Activated T-helper 1 cell treated with anti-CD3 and anti-CD28 coated beads, Interleukin-12 subunit alpha, Interleukin-12 subunit beta, Interleukin-2, Interleukin-4 antibody, amounts not matched to agents 30 ng/mL and 10 ng/mL and 1 ng/mL, durations not matched to agents 14 hours and 24 hours and 36 hours (primary cell): ENCODE measurements at regions of chr22 and their contacts with region 1.

Region 1: GRCh38 chr22:49992921-49993648 is 19.5 kb downstream of the IL17REL start:
- DNase-seq: peak; percentile 48
- H3K4me3 Mint-ChIP-seq: no peak overlapping the region
- H3K27ac Mint-ChIP-seq: no peak overlapping the region
- H3K4me1 Mint-ChIP-seq: peaks cover 10% of the 10 kb centered on the region
- H3K27me3 Mint-ChIP-seq: peaks cover 3% of the 10 kb centered on the region

Region 2: DNA sequence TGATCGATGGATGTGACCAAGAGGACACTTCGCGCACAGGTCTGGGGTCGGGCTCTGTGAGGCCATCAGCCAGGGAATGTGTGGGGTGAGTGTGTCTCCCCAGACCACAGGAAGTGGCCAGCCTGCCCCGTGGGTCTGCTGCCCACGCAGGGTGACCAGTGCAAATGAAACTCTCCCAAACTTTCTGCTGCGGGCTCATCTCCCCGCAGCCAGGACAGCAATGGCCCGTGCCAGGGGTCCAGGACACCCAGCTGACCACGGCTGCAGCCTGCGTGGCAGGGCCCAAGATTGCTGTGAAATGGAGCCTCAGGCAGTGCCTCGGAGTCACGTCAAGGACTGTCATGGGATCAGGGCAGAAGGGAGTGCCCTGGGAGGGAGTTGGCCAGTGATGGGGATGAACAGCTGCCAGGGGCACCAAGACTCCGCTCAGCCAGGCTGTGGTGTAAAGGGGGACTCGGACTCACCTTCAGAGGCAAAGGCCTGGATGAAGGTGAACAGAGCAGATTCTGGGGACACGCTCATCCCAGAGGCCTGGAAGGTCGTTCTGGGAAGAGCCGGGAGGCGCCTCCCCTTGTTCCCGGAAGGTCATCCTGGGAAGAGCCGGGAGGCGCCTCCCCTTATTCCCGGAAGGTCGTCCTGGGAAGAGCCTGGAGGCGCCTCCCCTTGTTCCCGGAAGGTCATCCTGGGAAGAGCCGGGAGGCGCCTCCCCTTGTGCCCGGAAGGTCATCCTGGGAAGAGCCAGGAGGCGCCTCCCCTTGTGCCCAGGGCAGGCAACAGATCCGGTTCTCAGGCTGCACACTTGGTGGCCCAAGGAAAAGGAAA is 418.0 kb before region 1 on chr22:
- intact Hi-C with region 1: no loop called
- DNase-seq: no peak
- H3K4me3 Mint-ChIP-seq: no peak overlapping the region
- H3K27ac Mint-ChIP-seq: no peak overlapping the region
- H3K4me1 Mint-ChIP-seq: no peaks in the 10 kb centered on the region
- H3K27me3 Mint-ChIP-seq: no peaks in the 10 kb centered on the region

Region 3: GRCh38 chr22:50016988-50017700 is 24.1 kb after region 1 on chr22:
- intact Hi-C with region 1: no loop called
- DNase-seq: no peak
- H3K4me3 Mint-ChIP-seq: peak overlapping the region; percentile 19
- H3K27ac Mint-ChIP-seq: peak overlapping the region; percentile 45
- H3K4me1 Mint-ChIP-seq: peaks cover 9% of the 10 kb centered on the region
- H3K27me3 Mint-ChIP-seq: peaks cover 2% of the 10 kb centered on the region

Region 4: DNA sequence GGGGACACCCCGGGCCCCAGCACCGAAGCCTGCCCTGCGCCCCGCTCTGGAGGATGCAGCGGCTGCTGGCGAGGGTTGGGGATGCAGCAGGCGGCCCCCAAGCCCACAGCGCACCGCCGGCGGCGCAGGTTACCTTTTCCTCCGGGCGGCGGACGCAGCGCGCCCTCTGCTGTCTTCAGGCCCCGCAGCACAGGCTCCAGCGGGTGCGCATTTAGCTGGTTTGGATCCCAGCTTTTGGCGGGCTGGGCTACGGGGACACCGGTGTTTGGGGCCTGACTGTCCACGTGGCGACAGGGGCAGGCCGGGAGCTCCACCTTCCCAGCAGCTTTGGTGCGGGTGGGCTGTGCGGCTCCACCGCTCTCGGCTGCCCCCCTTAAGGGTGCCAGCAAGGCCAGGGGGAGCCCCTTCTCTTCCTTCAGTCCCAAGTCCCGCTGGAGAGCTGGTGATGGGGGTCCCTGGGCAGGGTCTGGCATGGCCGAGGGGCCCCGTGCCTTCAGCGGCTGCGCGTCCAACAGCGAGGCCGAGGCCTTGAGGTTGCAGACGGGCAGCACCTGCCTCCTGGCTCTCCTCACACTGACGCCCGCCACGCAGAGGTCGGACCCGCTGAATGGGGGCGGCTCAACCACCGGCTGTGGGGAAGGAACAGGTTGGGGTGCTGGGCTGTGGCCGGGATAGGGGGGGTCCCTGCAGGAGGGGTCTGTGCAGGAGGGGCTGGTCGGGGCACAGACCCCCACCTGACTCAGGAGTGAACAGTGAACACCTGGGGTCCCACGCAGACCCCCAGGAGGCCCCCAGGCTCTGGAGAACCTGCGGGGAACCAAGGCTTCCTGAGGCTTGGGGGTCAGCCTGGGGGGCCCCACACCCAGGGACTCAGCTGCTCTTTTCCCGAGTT is 37.5 kb after region 1 on chr22:
- intact Hi-C with region 1: loop called (anchors 1 kb)
- DNase-seq: peak; percentile 76
- H3K4me3 Mint-ChIP-seq: no peak overlapping the region
- H3K27ac Mint-ChIP-seq: no peak overlapping the region
- H3K4me1 Mint-ChIP-seq: peaks cover 8% of the 10 kb centered on the region
- H3K27me3 Mint-ChIP-seq: peaks cover 5% of the 10 kb centered on the region

Region 5: DNA sequence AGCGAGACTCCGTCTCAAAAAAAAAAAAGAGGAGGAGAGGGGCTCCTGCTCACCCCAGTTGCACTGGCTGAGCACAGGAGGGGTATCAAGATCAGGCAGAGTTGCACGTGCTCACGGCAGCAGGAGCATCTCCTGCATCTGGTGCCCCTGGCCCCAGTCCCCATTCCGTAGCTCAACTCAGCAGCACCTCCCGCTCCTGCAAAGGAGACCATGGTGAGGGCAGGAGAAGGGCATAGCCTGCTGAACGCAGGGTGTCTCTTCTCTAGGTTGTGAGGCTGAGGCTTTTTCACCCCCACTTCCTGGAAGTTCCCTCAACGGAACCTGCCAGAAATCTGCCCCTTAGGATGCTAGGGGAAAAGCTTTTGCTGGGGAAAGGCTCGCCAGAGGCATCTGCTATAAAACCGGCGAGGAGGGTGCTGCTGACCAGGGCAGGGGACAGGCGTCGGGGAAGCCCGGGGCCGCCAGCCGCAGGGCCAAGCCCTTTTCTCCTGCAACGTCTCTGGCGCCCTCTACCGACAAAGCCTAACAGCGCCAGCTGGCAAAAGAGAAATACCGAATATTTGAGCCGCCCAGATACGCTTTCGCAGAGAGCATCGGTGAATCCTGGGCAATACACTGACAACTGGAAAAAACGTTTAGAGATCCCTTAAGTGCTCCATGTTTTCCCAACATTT is 349.0 kb after region 1 on chr22:
- intact Hi-C with region 1: no loop called
- DNase-seq: peak; percentile 80
- H3K4me3 Mint-ChIP-seq: peak overlapping the region; percentile 83
- H3K27ac Mint-ChIP-seq: peak overlapping the region; percentile 78
- H3K4me1 Mint-ChIP-seq: peaks cover 11% of the 10 kb centered on the region
- H3K27me3 Mint-ChIP-seq: peaks cover 2% of the 10 kb centered on the region